ENCODE measurements at regions of chr1 and their contacts with region 1.

Region 1: GRCh38 chr1:113904674-113905434 is at the starts of genes AP4B1 and DCLRE1B:
- DNase-seq: peak; percentile 91 to 100
- ATAC-seq: peak; percentile 91 to 98 (median 91)
- H3K4me3 ChIP-seq: peak within 1 kb of the TSS; percentile 70
- H3K4me3 Mint-ChIP-seq: peak within 1 kb of the TSS; percentile 98
- H3K27ac ChIP-seq: peak within 1 kb of the TSS; percentile 93
- H3K27ac Mint-ChIP-seq: peak within 1 kb of the TSS; percentile 99
- H3K4me1 ChIP-seq: peaks cover 32% of the 10 kb centered on the region
- H3K4me1 Mint-ChIP-seq: peaks cover 50 to 66% of the 10 kb centered on the region in 2 donors
- H3K27me3 ChIP-seq: no peaks in the 10 kb centered on the region
- H3K27me3 Mint-ChIP-seq: no peaks in the 10 kb centered on the region
- CTCF ChIP-seq: peak; percentile 62
- total RNA-seq, gene AP4B1: 64.0 to 78.7 (median 77.6) TPM
- total RNA-seq, gene DCLRE1B: 5.5 to 6.8 (median 5.9) TPM

Region 2: GRCh38 chr1:113759333-113760101 is 145.3 kb before region 1 on chr1 and contains the start of gene PHTF1:
- intact Hi-C with region 1: loop called (anchors 2 kb)
- DNase-seq: peak; percentile 73
- ATAC-seq: peak; percentile 84 to 94 (median 86)
- H3K4me3 ChIP-seq: peak within 1 kb of the TSS; percentile 98
- H3K4me3 Mint-ChIP-seq: peak within 1 kb of the TSS; percentile 97
- H3K27ac ChIP-seq: peak within 1 kb of the TSS; percentile 83
- H3K27ac Mint-ChIP-seq: peak within 1 kb of the TSS; percentile 92 to 98
- H3K4me1 ChIP-seq: peaks cover 8% of the 10 kb centered on the region
- H3K4me1 Mint-ChIP-seq: peaks cover 44% of the 10 kb centered on the region in 2 donors
- H3K27me3 ChIP-seq: no peaks in the 10 kb centered on the region
- H3K27me3 Mint-ChIP-seq: no peaks in the 10 kb centered on the region
- CTCF ChIP-seq: no peak
- total RNA-seq, gene PHTF1: 37.1 to 40.7 (median 40.6) TPM

Region 3: DNA sequence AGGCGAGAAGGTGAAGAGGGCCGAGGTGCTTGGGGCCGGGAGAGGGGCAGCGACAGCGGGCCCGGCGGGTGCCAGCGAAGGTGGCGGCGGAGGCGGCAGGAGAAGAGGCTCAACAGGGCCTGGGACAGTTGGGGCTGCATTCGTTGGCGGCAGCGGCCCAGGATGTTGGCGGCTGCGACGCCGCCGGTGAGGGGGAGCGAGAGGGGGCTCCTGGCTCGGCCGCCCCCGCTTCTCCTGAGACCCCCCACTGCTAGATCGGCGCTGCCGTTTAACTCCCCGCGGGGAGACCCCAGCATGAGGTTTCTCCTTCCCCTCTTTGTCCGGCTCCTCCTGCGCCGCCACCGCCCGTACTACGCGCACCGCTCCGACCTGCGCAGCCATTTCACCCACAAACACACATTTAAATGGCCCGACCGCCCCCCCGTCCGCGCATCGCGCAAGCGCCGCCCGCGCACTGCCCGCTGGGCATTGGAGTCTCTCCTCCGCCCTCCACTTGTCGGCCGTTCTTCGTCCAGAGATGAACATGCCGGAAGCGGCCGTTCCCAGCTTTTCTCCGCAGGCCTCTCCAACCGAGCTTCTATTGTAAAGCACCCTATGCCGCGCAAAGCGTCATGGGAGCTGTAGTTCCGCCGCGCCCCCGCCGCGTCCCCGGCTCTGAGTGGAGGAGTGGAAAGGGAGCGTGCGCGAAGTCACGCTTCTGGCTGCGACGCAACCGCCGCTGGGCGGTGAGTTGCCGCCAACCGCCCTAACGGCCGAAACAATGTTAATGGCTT is 92.8 kb before region 1 on chr1 and contains the start of gene RSBN1:
- intact Hi-C with region 1: loop called (anchors 1 kb)
- DNase-seq: peak; percentile 94 to 98
- ATAC-seq: peak; percentile 84 to 97 (median 88)
- H3K4me3 ChIP-seq: peak within 1 kb of the TSS; percentile 85
- H3K4me3 Mint-ChIP-seq: peak within 1 kb of the TSS; percentile 98
- H3K27ac ChIP-seq: peak within 1 kb of the TSS; percentile 97
- H3K27ac Mint-ChIP-seq: peak within 1 kb of the TSS; percentile 95
- H3K4me1 ChIP-seq: peaks cover 8% of the 10 kb centered on the region
- H3K4me1 Mint-ChIP-seq: peaks cover 37 to 38% of the 10 kb centered on the region in 2 donors
- H3K27me3 ChIP-seq: no peaks in the 10 kb centered on the region
- H3K27me3 Mint-ChIP-seq: no peaks in the 10 kb centered on the region
- CTCF ChIP-seq: no peak
- total RNA-seq, gene RSBN1: 30.1 to 37.9 (median 36.5) TPM

Region 4: GRCh38 chr1:113835642-113836307 is 69.1 kb before region 1 on chr1:
- intact Hi-C with region 1: loop called (anchors 1 kb)
- DNase-seq: peak in 1 of 2 donors; percentile 83
- ATAC-seq: peak in 2 of 3 donors; percentile 53 to 67
- H3K4me3 ChIP-seq: no peak overlapping the region
- H3K4me3 Mint-ChIP-seq: no peak overlapping the region
- H3K27ac ChIP-seq: no peak overlapping the region
- H3K27ac Mint-ChIP-seq: peak overlapping the region in 1 of 2 donors; percentile 66
- H3K4me1 ChIP-seq: no peaks in the 10 kb centered on the region
- H3K4me1 Mint-ChIP-seq: no peaks in the 10 kb centered on the region
- H3K27me3 ChIP-seq: no peaks in the 10 kb centered on the region
- H3K27me3 Mint-ChIP-seq: no peaks in the 10 kb centered on the region
- CTCF ChIP-seq: peak; percentile 74

Region 5: DNA sequence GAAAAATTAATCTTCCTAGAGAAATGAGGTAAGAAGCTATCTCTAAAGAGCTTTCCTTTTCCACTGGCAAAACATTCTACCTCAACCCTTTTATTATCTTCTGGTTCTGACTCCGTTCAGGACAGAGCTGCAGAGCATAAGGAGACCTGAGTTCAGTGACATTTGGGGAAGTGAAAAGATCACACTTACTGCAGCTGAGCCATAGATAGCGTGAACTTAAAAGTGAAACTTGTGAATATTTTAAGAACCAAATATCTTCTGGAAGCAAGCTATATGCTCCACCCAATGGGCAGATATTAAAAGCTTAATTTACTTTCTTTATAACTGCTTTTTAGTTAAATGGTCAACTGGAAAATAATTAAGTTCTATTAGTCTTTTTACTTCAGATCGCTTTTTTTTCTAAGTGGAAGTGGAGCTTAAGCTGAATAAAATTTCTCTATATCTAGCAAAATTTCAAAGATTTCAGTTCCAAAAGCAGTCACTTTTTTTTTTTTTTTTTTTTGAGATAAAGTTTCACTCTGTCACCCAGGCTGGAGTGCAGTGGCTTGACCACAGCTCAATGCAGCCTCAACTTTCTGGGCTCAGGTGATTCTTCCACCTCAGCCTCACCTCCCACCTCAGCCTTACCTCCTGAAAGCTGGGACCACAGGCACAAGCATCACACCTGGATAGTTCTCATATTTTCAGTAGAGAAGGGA is 45.2 kb before region 1 on chr1:
- intact Hi-C with region 1: loop called (anchors 2 kb)
- DNase-seq: peak in 1 of 2 donors; percentile 47
- ATAC-seq: peak; percentile 86 to 88 (median 88)
- H3K4me3 ChIP-seq: peak overlapping the region; percentile 4
- H3K4me3 Mint-ChIP-seq: peak overlapping the region; percentile 65
- H3K27ac ChIP-seq: peak overlapping the region; percentile 66
- H3K27ac Mint-ChIP-seq: peak overlapping the region; percentile 76 to 89
- H3K4me1 ChIP-seq: peaks cover 21% of the 10 kb centered on the region
- H3K4me1 Mint-ChIP-seq: peaks cover 57 to 62% of the 10 kb centered on the region in 2 donors
- H3K27me3 ChIP-seq: no peaks in the 10 kb centered on the region
- H3K27me3 Mint-ChIP-seq: no peaks in the 10 kb centered on the region
- CTCF ChIP-seq: no peak

Region 6: DNA sequence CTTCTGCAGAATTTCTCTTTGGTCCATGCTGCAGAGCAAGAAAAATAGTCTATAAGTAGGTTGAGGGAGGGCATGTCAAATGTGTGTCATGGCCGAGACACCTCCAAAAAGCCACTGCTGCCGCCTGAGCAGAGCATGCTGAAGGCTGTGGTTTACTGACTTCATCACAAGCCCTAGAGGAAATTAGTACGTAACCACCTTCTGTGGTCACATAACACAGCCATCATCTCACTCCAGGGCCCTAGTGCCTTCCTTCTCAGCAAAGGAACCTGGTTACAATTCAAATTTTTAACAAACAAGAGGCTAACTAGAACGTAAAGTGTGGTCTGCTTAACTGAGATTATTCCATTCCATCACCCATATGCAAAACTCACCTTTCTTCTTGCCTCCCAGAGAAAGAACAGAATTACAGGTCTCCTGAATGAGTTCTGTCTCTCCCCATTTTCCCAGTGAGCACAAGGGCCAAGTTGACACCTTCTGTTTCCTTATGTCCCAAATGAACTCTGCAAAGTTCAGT is 33.2 kb before region 1 on chr1 and contains the start of gene PTPN22:
- intact Hi-C with region 1: loop called (anchors 1 kb)
- DNase-seq: peak; percentile 75 to 94
- ATAC-seq: peak; percentile 75 to 93 (median 92)
- H3K4me3 ChIP-seq: peak within 1 kb of the TSS; percentile 70
- H3K4me3 Mint-ChIP-seq: peak within 1 kb of the TSS; percentile 94
- H3K27ac ChIP-seq: peak within 1 kb of the TSS; percentile 92
- H3K27ac Mint-ChIP-seq: peak within 1 kb of the TSS; percentile 87 to 95
- H3K4me1 ChIP-seq: peaks cover 49% of the 10 kb centered on the region
- H3K4me1 Mint-ChIP-seq: peaks cover 78 to 85% of the 10 kb centered on the region in 2 donors
- H3K27me3 ChIP-seq: no peaks in the 10 kb centered on the region
- H3K27me3 Mint-ChIP-seq: no peaks in the 10 kb centered on the region
- CTCF ChIP-seq: no peak
- total RNA-seq, gene PTPN22: 98.4 to 122 (median 104) TPM

Measured in natural killer cell (primary cell).